Activated naive CD4-positive, alpha-beta T cell treated with anti-CD3 and anti-CD28 coated beads for 36 hours (primary cell): ENCODE measurements at regions of chr2 and their contacts with region 1.

Region 1: DNA sequence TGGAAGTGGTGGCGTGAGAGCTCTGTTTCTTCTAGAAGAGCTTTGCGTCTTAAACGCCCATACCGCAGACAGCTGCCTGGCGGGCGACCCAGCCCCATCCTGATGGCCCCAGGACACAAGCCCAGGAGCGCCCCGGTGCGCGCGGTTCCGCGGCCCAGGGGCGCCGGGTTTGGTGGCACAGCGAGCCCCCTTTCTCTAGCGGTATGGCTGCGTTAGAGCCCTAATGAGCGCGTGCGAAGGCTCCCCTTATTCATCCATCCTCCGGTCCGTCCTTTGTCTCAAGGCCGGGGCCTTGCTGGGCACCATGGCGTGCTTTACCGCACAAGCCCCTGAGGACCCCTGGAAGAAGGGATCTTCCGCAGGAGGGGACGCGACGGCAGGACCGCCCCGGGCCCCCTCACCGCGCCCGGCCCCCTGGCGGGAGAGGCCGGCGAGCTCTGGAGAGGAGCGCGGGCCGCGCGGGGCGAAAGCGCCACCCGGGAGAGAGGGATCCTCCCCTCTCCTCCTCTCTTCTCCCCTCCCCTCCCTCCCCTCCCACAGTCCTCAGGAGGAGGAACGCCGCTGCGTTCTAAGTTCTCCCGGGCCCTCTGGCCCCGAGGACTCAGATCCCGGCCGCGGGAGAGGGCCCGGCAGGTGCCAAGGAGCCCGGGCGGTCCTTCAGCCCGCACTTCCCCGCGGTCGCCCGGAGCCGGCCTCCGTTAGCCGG is 626 bp upstream of the SLC1A4 start:
- DNase-seq: peak; percentile 35
- H3K4me3 Mint-ChIP-seq: peak overlapping the region; percentile 60
- H3K27ac Mint-ChIP-seq: peak overlapping the region; percentile 7
- H3K4me1 Mint-ChIP-seq: peaks cover 35% of the 10 kb centered on the region
- H3K27me3 Mint-ChIP-seq: peaks cover 11% of the 10 kb centered on the region

Region 2: GRCh38 chr2:64730551-64731262 is 257.9 kb before region 1 on chr2:
- CTCF ChIA-PET with region 1: no interaction called
- intact Hi-C with region 1: loop called (anchors 10 kb)
- DNase-seq: peak; percentile 49
- H3K4me3 Mint-ChIP-seq: peak overlapping the region; percentile 78
- H3K27ac Mint-ChIP-seq: peak overlapping the region; percentile 90
- H3K4me1 Mint-ChIP-seq: peaks cover 63% of the 10 kb centered on the region
- H3K27me3 Mint-ChIP-seq: no peaks in the 10 kb centered on the region

Region 3: GRCh38 chr2:64945973-64946768 is 42.4 kb before region 1 on chr2:
- CTCF ChIA-PET with region 1: interaction called, 3 read pairs
- intact Hi-C with region 1: loop called (anchors 1 kb)
- DNase-seq: peak; percentile 84
- H3K4me3 Mint-ChIP-seq: peak overlapping the region; percentile 64
- H3K27ac Mint-ChIP-seq: peak overlapping the region; percentile 81
- H3K4me1 Mint-ChIP-seq: peaks cover 26% of the 10 kb centered on the region
- H3K27me3 Mint-ChIP-seq: no peaks in the 10 kb centered on the region

Region 4: DNA sequence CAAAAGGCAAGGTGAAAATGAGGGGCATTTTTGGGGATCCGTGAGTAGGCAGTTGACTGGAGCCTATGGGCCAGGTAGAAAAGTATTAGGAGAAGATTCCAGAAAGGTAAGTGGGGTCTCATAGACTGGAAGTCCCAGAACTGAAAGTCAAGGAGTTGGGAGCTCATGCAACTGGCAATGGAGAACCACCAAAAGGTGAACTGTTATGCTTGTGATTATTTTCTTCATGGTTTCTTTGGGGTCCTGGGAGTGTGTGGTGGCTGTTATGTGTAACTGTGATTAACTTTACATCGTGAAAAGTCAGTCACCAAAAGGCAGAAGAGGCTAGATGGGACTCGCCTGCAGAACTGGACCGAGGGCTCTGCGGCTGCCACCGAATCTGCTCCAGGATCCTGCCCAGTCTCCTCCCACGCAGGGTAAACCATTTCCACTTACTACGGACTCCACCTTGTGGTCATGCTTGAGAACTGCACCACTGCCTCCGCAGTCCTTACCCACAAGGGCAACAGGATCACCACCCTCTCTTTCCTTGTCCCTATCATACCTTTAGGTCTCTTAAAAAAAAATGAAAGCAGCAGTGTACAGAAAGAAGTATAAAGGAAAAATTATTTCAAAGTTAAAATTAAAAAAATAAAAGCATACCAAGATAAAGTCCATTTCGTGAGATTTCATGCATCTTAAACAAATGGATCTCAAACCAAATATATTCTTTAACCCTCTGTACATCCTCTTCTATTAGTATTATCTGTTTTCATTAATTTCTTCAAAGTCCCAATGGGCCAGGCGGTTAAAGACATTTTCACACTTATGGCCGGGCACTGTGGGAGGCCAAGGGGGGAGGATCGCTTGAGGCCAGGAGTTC is 52.1 kb after region 1 on chr2:
- CTCF ChIA-PET with region 1: interaction called, 3 read pairs
- intact Hi-C with region 1: loop called (anchors 2 kb)
- DNase-seq: peak; percentile 88
- H3K4me3 Mint-ChIP-seq: no peak overlapping the region
- H3K27ac Mint-ChIP-seq: no peak overlapping the region
- H3K4me1 Mint-ChIP-seq: peaks cover 7% of the 10 kb centered on the region
- H3K27me3 Mint-ChIP-seq: no peaks in the 10 kb centered on the region

Region 5: DNA sequence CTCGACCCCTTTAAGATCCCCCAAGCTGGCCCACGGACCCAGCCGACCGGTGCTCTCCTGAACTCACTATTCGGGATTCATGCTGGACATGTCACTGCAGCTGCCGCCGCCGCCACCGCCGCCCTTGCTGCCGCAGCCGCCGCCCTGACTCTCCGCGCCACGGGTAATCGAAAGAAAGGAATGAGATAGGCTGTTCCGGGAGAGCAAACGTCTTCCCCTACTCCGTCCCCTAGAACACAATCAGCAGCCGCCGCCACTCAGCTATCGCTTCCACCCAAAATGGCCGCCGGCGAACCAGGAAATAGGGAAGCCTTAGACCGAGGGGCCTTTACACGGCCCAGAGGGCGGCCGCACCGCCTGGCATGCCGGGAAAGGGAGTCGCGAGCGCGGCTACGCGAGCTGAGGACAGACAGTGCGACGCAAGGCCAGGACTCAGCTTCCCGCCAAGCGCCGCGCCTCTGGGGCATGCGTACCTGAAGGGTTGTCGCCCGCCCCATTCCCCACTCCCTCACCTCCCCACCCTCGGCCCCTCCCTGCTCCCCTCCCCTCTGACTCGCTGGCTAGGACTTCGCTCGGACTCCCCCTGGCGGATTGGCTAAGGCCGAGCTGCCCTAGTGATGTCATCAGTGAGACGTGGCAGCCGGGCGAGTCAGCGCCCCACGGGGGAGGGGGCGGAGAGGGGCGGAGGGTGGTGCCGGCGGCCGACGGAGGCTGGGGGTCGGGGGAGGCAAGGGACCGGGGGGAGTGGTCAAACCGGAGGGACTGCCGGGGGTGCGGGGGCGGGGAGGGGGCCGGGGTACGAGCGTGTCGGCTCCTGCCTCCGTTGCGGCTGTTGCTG is 141.5 kb after region 1 on chr2 and contains the start of gene RAB1A:
- CTCF ChIA-PET with region 1: no interaction called
- intact Hi-C with region 1: loop called (anchors 1 kb)
- DNase-seq: peak; percentile 100
- H3K4me3 Mint-ChIP-seq: peak within 1 kb of the TSS; percentile 95
- H3K27ac Mint-ChIP-seq: peak within 1 kb of the TSS; percentile 94
- H3K4me1 Mint-ChIP-seq: peaks cover 35% of the 10 kb centered on the region
- H3K27me3 Mint-ChIP-seq: no peaks in the 10 kb centered on the region
- total RNA-seq, gene RAB1A: 60.8 to 61.3 TPM

Region 6: DNA sequence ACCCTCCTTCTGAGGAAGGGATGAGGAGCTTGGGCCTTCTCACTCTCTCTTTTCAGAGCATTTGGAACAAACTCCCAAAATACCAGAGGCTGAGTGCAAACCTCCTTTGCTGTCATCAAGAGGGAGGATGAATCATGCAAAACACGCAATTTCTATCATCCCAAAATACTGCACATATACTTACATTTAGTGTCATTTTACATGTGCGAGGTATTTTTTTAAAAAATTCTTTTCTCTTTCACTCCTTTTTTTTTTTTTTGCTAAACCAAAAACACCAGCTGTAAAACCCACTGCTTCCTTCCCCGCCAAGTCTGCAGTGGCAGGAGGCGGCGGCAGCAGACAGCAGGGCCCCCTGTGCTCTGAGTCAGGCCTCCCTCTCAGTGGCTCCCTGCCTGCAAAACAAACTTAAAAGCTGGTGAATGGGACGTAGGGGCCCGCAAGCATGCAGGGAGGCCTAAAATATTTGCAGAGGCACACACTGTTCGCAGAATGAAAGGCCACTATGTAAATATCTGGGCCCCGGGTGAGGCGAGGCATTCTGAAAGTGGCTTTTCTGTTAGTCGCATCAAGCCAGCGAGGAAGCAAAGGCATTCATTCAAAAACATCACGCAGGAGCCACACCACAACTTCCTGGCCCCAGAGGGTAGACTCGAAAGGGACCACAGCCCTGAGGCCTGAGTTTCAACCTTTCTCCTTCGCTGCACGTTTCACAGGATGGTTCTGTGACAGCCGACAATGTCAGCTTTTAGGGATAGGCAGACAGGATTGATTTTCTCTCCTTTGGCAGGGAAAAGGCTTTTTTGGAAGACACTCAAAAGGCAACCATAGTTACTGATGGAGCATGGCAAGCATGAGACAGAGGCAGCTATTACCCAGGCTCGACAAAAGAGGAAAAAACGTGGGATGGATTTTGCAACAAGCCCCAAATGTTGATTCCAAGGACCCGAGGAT is 312.5 kb after region 1 on chr2:
- CTCF ChIA-PET with region 1: no interaction called
- intact Hi-C with region 1: loop called (anchors 2 kb)
- DNase-seq: peak; percentile 85
- H3K4me3 Mint-ChIP-seq: peak overlapping the region; percentile 62
- H3K27ac Mint-ChIP-seq: peak overlapping the region; percentile 82
- H3K4me1 Mint-ChIP-seq: peaks cover 41% of the 10 kb centered on the region
- H3K27me3 Mint-ChIP-seq: no peaks in the 10 kb centered on the region